ENCODE measurements at regions of chr6 and their contacts with region 1.

Region 1: DNA sequence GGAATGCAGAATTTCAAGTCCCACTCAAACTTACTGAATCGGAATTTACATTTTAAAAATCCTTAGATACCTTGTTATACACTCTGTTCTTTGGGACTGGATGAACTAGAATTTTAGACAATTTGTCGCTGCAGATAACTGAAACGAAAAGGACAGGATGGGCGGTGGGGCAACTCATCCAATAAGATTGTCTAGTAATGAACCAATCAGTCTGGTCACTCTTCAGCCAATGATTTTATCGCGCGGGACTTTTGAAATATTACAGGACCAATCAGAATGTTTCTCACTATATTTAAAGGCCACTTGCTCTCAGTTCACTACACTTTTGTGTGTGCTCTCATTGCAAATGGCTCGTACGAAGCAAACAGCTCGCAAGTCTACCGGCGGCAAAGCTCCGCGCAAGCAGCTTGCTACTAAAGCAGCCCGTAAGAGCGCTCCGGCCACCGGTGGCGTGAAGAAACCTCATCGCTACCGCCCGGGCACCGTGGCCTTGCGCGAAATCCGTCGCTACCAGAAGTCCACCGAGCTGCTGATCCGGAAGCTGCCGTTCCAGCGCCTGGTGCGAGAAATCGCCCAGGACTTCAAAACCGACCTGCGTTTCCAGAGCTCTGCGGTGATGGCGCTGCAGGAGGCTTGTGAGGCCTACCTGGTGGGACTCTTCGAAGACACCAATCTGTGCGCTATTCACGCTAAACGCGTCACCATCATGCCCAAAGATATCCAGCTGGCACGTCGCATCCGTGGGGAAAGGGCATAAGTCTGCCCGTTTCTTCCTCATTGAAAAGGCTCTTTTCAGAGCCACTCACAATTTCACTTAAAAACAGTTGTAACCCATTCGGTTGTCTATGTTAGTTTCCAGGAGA is 41.9 kb upstream of the HFE start:
- DNase-seq: peak; percentile 85
- ATAC-seq: peak; percentile 63
- H3K4me3 Mint-ChIP-seq: peak overlapping the region; percentile 76
- H3K27ac Mint-ChIP-seq: peak overlapping the region; percentile 96
- H3K4me1 Mint-ChIP-seq: peaks cover 10% of the 10 kb centered on the region
- H3K27me3 Mint-ChIP-seq: no peaks in the 10 kb centered on the region
- CTCF ChIP-seq: no peak

Region 2: GRCh38 chr6:25962149-25963127 is 82.9 kb before region 1 on chr6 and contains the start of gene TRIM38:
- CTCF ChIA-PET with region 1: no interaction called
- POLR2A ChIA-PET with region 1: no interaction called
- intact Hi-C with region 1: no loop called
- DNase-seq: peak; percentile 88
- ATAC-seq: peak; percentile 87
- H3K4me3 Mint-ChIP-seq: peak within 1 kb of the TSS; percentile 83
- H3K27ac Mint-ChIP-seq: peak within 1 kb of the TSS; percentile 94
- H3K4me1 Mint-ChIP-seq: peaks cover 73% of the 10 kb centered on the region
- H3K27me3 Mint-ChIP-seq: no peaks in the 10 kb centered on the region
- CTCF ChIP-seq: no peak
- total RNA-seq, gene TRIM38: 8.0 to 8.3 TPM

Region 3: GRCh38 chr6:26025894-26026832 is 19.1 kb before region 1 on chr6:
- CTCF ChIA-PET with region 1: interaction called, 48 read pairs
- POLR2A ChIA-PET with region 1: interaction called, 1,376 read pairs
- intact Hi-C with region 1: loop called (anchors 2 kb)
- DNase-seq: peak; percentile 97
- ATAC-seq: peak; percentile 41
- H3K4me3 Mint-ChIP-seq: peak overlapping the region; percentile 77
- H3K27ac Mint-ChIP-seq: peak overlapping the region; percentile 95
- H3K4me1 Mint-ChIP-seq: peaks cover 51% of the 10 kb centered on the region
- H3K27me3 Mint-ChIP-seq: peaks cover 2% of the 10 kb centered on the region
- CTCF ChIP-seq: peak; percentile 75

Region 4: DNA sequence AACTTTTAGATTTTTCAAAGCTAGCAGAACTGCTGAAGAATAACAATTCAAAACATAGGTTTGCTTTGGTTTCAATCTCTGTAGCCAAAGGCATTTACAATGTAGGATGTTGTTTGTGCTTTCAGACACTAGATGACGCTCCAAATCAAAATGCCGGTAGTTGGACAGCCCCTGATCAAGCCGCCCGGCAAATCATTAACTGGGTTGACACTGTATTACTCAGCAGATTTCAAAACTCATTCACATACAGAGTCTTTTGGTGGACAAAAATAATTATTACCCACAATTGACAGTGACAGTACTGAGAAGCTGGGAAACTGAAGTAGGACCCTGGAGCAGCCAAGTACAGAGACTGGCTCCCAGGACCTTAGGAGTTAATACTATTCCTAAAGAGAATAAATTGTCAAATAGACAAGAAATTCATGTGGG is 20.7 kb after region 1 on chr6:
- CTCF ChIA-PET with region 1: interaction called, 7 read pairs
- POLR2A ChIA-PET with region 1: interaction called, 32 read pairs
- intact Hi-C with region 1: no loop called
- DNase-seq: peak; percentile 73
- ATAC-seq: peak; percentile 95
- H3K4me3 Mint-ChIP-seq: no peak overlapping the region
- H3K27ac Mint-ChIP-seq: no peak overlapping the region
- H3K4me1 Mint-ChIP-seq: no peaks in the 10 kb centered on the region
- H3K27me3 Mint-ChIP-seq: no peaks in the 10 kb centered on the region
- CTCF ChIP-seq: peak; percentile 79

Region 5: DNA sequence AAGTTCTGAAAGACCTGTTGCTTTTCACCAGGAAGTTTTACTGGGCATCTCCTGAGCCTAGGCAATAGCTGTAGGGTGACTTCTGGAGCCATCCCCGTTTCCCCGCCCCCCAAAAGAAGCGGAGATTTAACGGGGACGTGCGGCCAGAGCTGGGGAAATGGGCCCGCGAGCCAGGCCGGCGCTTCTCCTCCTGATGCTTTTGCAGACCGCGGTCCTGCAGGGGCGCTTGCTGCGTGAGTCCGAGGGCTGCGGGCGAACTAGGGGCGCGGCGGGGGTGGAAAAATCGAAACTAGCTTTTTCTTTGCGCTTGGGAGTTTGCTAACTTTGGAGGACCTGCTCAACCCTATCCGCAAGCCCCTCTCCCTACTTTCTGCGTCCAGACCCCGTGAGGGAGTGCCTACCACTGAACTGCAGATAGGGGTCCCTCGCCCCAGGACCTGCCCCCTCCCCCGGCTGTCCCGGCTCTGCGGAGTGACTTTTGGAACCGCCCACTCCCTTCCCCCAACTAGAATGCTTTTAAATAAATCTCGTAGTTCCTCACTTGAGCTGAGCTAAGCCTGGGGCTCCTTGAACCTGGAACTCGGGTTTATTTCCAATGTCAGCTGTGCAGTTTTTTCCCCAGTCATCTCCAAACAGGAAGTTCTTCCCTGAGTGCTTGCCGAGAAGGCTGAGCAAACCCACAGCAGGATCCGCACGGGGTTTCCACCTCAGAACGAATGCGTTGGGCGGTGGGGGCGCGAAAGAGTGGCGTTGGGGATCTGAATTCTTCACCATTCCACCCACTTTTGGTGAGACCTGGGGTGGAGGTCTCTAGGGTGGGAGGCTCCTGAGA is 42.2 kb after region 1 on chr6 and contains the start of gene HFE:
- CTCF ChIA-PET with region 1: no interaction called
- POLR2A ChIA-PET with region 1: interaction called, 16 read pairs
- intact Hi-C with region 1: no loop called
- DNase-seq: peak; percentile 41
- ATAC-seq: peak; percentile 22
- H3K4me3 Mint-ChIP-seq: peak within 1 kb of the TSS; percentile 74
- H3K27ac Mint-ChIP-seq: peak within 1 kb of the TSS; percentile 69
- H3K4me1 Mint-ChIP-seq: peaks cover 33% of the 10 kb centered on the region
- H3K27me3 Mint-ChIP-seq: no peaks in the 10 kb centered on the region
- CTCF ChIP-seq: no peak
- total RNA-seq, gene HFE: 0.25 to 0.56 TPM

Region 6: DNA sequence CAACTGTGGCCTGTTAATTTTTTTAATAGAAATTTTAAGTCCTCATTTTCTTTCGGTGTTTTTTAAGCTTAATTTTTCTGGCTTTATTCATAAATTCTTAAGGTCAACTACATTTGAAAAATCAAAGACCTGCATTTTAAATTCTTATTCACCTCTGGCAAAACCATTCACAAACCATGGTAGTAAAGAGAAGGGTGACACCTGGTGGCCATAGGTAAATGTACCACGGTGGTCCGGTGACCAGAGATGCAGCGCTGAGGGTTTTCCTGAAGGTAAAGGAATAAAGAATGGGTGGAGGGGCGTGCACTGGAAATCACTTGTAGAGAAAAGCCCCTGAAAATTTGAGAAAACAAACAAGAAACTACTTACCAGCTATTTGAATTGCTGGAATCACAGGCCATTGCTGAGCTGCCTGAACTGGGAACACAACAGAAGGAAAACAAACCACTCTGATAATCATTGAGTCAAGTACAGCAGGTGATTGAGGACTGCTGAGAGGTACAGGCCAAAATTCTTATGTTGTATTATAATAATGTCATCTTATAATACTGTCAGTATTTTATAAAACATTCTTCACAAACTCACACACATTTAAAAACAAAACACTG is 52.1 kb after region 1 on chr6:
- CTCF ChIA-PET with region 1: interaction called, 11 read pairs
- POLR2A ChIA-PET with region 1: interaction called, 65 read pairs
- intact Hi-C with region 1: no loop called
- DNase-seq: peak; percentile 77
- ATAC-seq: peak; percentile 89
- H3K4me3 Mint-ChIP-seq: no peak overlapping the region
- H3K27ac Mint-ChIP-seq: no peak overlapping the region
- H3K4me1 Mint-ChIP-seq: peaks cover 4% of the 10 kb centered on the region
- H3K27me3 Mint-ChIP-seq: no peaks in the 10 kb centered on the region
- CTCF ChIP-seq: peak; percentile 82

Region 7: DNA sequence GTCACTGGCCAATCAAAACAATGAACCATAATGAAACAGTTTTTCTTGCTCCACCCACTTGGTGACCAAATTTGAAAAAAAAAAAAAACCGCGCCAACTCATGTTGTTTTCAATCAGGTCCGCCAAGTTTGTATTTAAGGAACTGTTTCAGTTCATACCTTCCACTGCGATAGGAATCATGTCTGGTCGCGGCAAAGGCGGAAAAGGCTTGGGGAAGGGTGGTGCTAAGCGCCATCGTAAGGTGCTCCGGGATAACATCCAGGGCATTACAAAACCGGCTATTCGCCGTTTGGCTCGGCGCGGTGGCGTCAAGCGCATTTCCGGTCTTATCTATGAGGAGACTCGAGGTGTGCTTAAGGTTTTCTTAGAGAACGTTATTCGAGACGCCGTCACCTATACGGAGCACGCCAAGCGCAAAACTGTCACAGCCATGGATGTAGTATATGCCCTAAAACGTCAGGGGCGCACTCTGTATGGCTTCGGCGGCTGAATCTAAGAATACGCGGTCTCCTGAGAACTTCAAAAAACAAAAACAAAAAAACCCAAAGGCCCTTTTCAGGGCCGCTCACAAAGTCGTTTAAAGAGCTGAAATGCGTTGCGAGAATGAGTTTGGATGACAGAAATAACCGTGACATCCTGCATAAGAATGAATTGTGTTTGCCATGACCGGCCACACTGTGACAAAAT is 58.6 kb after region 1 on chr6:
- CTCF ChIA-PET with region 1: no interaction called
- POLR2A ChIA-PET with region 1: interaction called, 65 read pairs
- intact Hi-C with region 1: no loop called
- DNase-seq: peak; percentile 90
- ATAC-seq: peak; percentile 87
- H3K4me3 Mint-ChIP-seq: peak overlapping the region; percentile 85
- H3K27ac Mint-ChIP-seq: peak overlapping the region; percentile 98
- H3K4me1 Mint-ChIP-seq: peaks cover 15% of the 10 kb centered on the region
- H3K27me3 Mint-ChIP-seq: peaks cover 2% of the 10 kb centered on the region
- CTCF ChIP-seq: peak; percentile 46

Measured in activated CD8-positive, alpha-beta T cell treated with anti-CD3 and anti-CD28 coated beads for 36 hours (primary cell).